Panc1 (cell line): ENCODE measurements at regions of chr10 and their contacts with region 1.

Region 1: DNA sequence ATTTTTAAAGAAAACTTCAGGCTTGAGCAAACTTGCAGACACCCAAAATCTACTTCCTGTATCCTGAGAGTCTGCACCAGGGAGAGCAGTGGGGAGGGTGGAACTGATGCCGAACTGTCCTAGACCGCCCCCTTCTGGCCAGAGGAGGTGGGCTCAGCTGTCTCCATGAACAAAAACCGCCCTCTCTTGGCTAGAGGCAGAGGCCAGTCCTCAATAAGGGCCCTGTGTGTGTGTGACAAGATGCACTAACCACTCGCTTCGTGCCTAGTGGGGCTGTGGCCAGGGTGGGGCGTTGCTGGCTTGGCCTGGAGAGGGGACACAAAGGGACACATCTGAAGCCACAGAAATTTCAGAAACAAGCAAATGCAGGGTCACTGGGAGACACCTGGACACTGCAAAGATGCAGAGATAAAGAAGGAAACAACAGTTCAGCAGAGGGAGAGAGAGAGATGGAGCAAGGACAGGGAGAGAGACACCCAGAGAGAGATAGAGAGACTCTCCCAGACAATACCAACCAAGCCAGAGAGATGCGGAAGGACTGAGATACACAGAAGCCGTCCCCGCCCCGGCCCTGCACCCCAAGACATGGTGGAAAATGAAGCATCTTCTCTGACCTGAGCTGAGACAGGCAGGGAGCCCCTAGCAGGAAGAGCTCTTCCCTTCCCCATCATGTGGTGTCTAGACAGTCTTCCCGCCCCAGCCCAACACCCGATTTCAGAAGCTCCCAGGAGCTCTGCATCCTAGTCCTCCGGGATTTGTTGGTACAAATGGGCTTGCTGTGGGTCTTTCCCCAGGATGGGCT is 22.7 kb upstream of the FXYD4 start:
- DNase-seq: peak; percentile 85
- ATAC-seq: peak; percentile 99
- H3K4me3 ChIP-seq: no peak overlapping the region
- H3K27ac ChIP-seq: no peak overlapping the region
- H3K4me1 ChIP-seq: peaks cover 2% of the 10 kb centered on the region; the same call in 1 of the 2 replicates
- H3K27me3 ChIP-seq: no peaks in the 10 kb centered on the region
- CTCF ChIP-seq: peak; percentile 100

Region 2: GRCh38 chr10:43204943-43205671 is 143.6 kb before region 1 on chr10:
- CTCF ChIA-PET with region 1: interaction called, 13 read pairs
- POLR2A ChIA-PET with region 1: no interaction called
- in situ Hi-C with region 1: no loop called
- intact Hi-C with region 1: loop called (anchors 2 kb)
- DNase-seq: peak; percentile 72
- ATAC-seq: peak; percentile 73
- H3K4me3 ChIP-seq: no peak overlapping the region
- H3K27ac ChIP-seq: no peak overlapping the region
- H3K4me1 ChIP-seq: peaks cover 9% of the 10 kb centered on the region
- H3K27me3 ChIP-seq: no peaks in the 10 kb centered on the region
- CTCF ChIP-seq: peak; percentile 99

Region 3: GRCh38 chr10:43292755-43293676 is 55.7 kb before region 1 on chr10:
- CTCF ChIA-PET with region 1: interaction called, 6 read pairs
- POLR2A ChIA-PET with region 1: no interaction called
- in situ Hi-C with region 1: no loop called
- intact Hi-C with region 1: loop called (anchors 1 kb)
- DNase-seq: peak; percentile 39
- ATAC-seq: peak; percentile 93
- H3K4me3 ChIP-seq: 0 out of 4 replicates have a peak overlapping the region, but pooled peaks of 1 of the 2 experiments have one; percentile 16
- H3K27ac ChIP-seq: no peak overlapping the region
- H3K4me1 ChIP-seq: peaks cover 11% of the 10 kb centered on the region
- H3K27me3 ChIP-seq: no peaks in the 10 kb centered on the region
- CTCF ChIP-seq: peak; percentile 93

Region 4: GRCh38 chr10:43304687-43305340 is 43.9 kb before region 1 on chr10:
- CTCF ChIA-PET with region 1: no interaction called
- POLR2A ChIA-PET with region 1: no interaction called
- in situ Hi-C with region 1: no loop called
- intact Hi-C with region 1: no loop called
- DNase-seq: no peak
- ATAC-seq: peak; percentile 87
- H3K4me3 ChIP-seq: peak overlapping the region; percentile 45 to 64
- H3K27ac ChIP-seq: no peak overlapping the region
- H3K4me1 ChIP-seq: no peaks in the 10 kb centered on the region
- H3K27me3 ChIP-seq: peaks cover 5% of the 10 kb centered on the region
- CTCF ChIP-seq: no peak

Region 5: GRCh38 chr10:43461950-43462349 is 113.2 kb after region 1 on chr10:
- CTCF ChIA-PET with region 1: no interaction called
- POLR2A ChIA-PET with region 1: interaction called, 3 read pairs
- in situ Hi-C with region 1: no loop called
- intact Hi-C with region 1: loop called (anchors 5 kb)
- DNase-seq: peak; percentile 69
- ATAC-seq: peak; percentile 86
- H3K4me3 ChIP-seq: no peak overlapping the region
- H3K27ac ChIP-seq: no peak overlapping the region
- H3K4me1 ChIP-seq: no peaks in the 10 kb centered on the region
- H3K27me3 ChIP-seq: no peaks in the 10 kb centered on the region
- CTCF ChIP-seq: peak; percentile 85

Region 6: GRCh38 chr10:43491855-43492254 is 143.1 kb after region 1 on chr10:
- CTCF ChIA-PET with region 1: interaction called, 12 read pairs
- POLR2A ChIA-PET with region 1: no interaction called
- in situ Hi-C with region 1: no loop called
- intact Hi-C with region 1: no loop called
- DNase-seq: no peak
- ATAC-seq: no peak
- H3K4me3 ChIP-seq: no peak overlapping the region
- H3K27ac ChIP-seq: no peak overlapping the region
- H3K4me1 ChIP-seq: no peaks in the 10 kb centered on the region
- H3K27me3 ChIP-seq: no peaks in the 10 kb centered on the region
- CTCF ChIP-seq: no peak